HEK293 (cell line): ENCODE measurements at regions of chr21 and their contacts with region 1.

Region 1: GRCh38 chr21:33199516-33200217 is 30.1 kb upstream of the IFNAR2 start:
- H3K4me3 ChIP-seq: no peak overlapping the region
- H3K27ac ChIP-seq: no peak overlapping the region
- H3K4me1 ChIP-seq: no peaks in the 10 kb centered on the region
- CTCF ChIP-seq: peak; percentile 81

Region 2: GRCh38 chr21:32717851-32718316 is 481.8 kb before region 1 on chr21:
- CTCF ChIA-PET with region 1: no interaction called
- POLR2A ChIA-PET with region 1: no interaction called
- H3K4me3 ChIP-seq: no peak overlapping the region
- H3K27ac ChIP-seq: peak overlapping the region; percentile 51
- H3K4me1 ChIP-seq: peaks cover 19% of the 10 kb centered on the region
- CTCF ChIP-seq: no peak

Region 3: DNA sequence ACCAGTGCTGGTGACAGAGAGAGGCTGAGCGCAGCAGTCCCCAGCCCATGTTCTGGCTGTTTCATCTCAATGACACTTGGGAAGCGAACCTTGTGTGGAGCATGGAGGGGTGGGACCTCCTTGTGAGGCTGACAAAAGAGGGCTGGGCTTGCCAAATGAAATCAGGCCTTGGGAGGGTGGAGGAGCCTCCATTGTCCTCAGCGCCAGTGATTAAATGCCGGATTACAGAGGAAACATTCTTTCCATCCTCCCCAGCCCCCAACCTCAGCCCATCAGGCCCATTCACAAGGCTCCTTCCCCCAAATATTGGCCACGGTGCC is 364.8 kb before region 1 on chr21:
- CTCF ChIA-PET with region 1: interaction called, 38 read pairs
- POLR2A ChIA-PET with region 1: no interaction called
- H3K4me3 ChIP-seq: no peak overlapping the region
- H3K27ac ChIP-seq: no peak overlapping the region
- H3K4me1 ChIP-seq: no peaks in the 10 kb centered on the region
- CTCF ChIP-seq: no peak

Region 4: GRCh38 chr21:32940079-32941014 is 259.3 kb before region 1 on chr21:
- CTCF ChIA-PET with region 1: interaction called, 46 read pairs
- POLR2A ChIA-PET with region 1: no interaction called
- H3K4me3 ChIP-seq: no peak overlapping the region
- H3K27ac ChIP-seq: no peak overlapping the region
- H3K4me1 ChIP-seq: no peaks in the 10 kb centered on the region
- CTCF ChIP-seq: peak; percentile 50; the same call in 1 of the 2 replicates

Region 5: GRCh38 chr21:33025489-33026442 is 173.9 kb before region 1 on chr21 and contains the start of gene OLIG2:
- CTCF ChIA-PET with region 1: interaction called, 15 read pairs
- POLR2A ChIA-PET with region 1: no interaction called
- H3K4me3 ChIP-seq: peak within 1 kb of the TSS; percentile 48
- H3K27ac ChIP-seq: no peak within 1 kb of the TSS; the same call in 1 of the 2 replicates
- H3K4me1 ChIP-seq: no peaks in the 10 kb centered on the region
- CTCF ChIP-seq: no peak

Region 6: DNA sequence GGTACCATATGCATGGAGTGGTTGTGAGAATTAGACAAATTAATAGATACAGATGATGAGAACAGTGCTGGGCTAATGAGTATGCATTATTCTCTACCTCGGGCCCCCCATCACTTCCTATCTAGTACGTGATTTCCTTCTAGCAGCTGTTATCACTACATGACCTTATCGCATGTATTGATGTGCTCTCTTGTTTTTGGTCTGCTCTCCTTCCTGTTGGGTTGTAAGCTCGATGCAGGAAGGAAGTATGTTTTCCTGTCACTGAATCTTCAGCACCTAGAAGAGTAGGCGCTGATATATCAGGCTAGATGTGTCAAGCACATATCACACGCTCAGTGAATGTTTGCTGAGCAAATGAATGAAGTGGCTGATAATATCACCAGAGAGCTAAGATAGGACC is 13.8 kb before region 1 on chr21:
- CTCF ChIA-PET with region 1: interaction called, 23 read pairs
- POLR2A ChIA-PET with region 1: no interaction called
- H3K4me3 ChIP-seq: no peak overlapping the region
- H3K27ac ChIP-seq: no peak overlapping the region
- H3K4me1 ChIP-seq: peaks cover 16% of the 10 kb centered on the region
- CTCF ChIP-seq: no peak

Region 7: DNA sequence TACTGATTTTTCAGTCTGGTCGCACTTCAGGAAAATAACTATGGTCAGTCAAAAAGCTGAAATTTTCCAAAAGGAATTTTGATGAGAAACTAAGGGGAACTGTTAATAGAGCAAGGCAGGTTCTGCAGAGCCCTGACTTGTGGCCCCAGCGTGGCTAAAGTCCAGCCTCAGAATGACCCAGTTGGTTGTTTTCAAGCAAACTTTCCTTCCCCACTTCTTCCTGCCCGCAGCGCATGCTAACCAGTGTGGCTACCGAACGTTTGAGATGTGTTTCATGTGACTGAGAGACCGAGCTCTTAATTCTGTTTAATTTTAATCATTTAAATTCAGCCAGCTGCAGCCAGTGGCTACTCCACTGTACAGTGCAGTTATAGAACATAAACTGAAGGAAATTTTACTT is 60.3 kb after region 1 on chr21:
- CTCF ChIA-PET with region 1: no interaction called
- POLR2A ChIA-PET with region 1: no interaction called
- H3K4me3 ChIP-seq: no peak overlapping the region
- H3K27ac ChIP-seq: no peak overlapping the region
- H3K4me1 ChIP-seq: no peaks in the 10 kb centered on the region
- CTCF ChIP-seq: no peak

Region 8: GRCh38 chr21:33374450-33375096 is 174.9 kb after region 1 on chr21:
- CTCF ChIA-PET with region 1: interaction called, 29 read pairs
- POLR2A ChIA-PET with region 1: no interaction called
- H3K4me3 ChIP-seq: no peak overlapping the region
- H3K27ac ChIP-seq: no peak overlapping the region
- H3K4me1 ChIP-seq: peaks cover 3% of the 10 kb centered on the region; the same call in 1 of the 2 replicates
- CTCF ChIP-seq: peak; percentile 39; the same call in 1 of the 2 replicates

Region 9: GRCh38 chr21:33537212-33537611 is 337.5 kb after region 1 on chr21:
- CTCF ChIA-PET with region 1: no interaction called
- POLR2A ChIA-PET with region 1: no interaction called
- H3K4me3 ChIP-seq: no peak overlapping the region
- H3K27ac ChIP-seq: no peak overlapping the region
- H3K4me1 ChIP-seq: peaks cover 5% of the 10 kb centered on the region; the same call in 1 of the 2 replicates
- CTCF ChIP-seq: no peak

Region 10: GRCh38 chr21:33608559-33608958 is 408.9 kb after region 1 on chr21:
- CTCF ChIA-PET with region 1: interaction called, 10 read pairs
- POLR2A ChIA-PET with region 1: no interaction called
- H3K4me3 ChIP-seq: no peak overlapping the region
- H3K27ac ChIP-seq: no peak overlapping the region
- H3K4me1 ChIP-seq: no peaks in the 10 kb centered on the region
- CTCF ChIP-seq: no peak